MCF 10A (cell line): ENCODE measurements at regions of chr14 and their contacts with region 1.

Region 1: DNA sequence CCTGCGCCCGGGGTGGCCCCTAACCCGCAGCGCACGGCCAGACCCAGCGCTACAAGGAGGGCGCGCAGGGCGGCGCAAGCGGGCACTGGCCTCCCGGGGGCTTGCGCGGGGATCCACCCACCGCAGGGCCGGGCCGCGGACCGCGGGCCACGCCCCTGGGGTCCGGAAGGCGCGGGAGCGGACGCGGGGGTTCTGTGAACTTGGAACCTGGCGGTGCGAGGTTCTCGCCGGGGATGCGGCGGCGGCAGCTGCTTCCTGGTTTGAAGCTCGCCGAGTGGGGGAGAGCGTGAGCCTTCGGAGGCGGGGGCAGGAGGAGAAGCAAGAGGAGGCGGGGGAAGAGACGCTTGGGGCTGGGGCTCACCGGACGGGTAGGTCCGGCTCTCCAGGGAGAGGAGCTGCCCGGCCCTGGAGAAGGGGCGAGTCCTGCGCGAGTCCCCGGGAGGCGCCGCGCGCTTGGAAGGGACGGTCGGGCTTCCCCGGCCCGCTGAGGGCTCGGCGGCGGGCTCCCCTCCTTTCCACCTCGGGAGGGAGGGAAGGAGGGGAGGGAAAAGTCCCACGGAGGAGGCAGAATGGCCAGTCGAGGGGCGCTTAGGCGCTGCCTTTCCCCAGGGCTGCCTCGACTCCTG is at the start of gene PRKCH:
- DNase-seq: peak; percentile 78
- H3K4me3 Mint-ChIP-seq: peak within 1 kb of the TSS; percentile 94
- H3K27ac Mint-ChIP-seq: peak within 1 kb of the TSS; percentile 98
- H3K4me1 Mint-ChIP-seq: peaks cover 15% of the 10 kb centered on the region
- H3K27me3 Mint-ChIP-seq: no peaks in the 10 kb centered on the region
- CTCF ChIP-seq: no peak
- total RNA-seq, gene PRKCH: 10.4 and 12.4 TPM in 2 replicates

Region 2: DNA sequence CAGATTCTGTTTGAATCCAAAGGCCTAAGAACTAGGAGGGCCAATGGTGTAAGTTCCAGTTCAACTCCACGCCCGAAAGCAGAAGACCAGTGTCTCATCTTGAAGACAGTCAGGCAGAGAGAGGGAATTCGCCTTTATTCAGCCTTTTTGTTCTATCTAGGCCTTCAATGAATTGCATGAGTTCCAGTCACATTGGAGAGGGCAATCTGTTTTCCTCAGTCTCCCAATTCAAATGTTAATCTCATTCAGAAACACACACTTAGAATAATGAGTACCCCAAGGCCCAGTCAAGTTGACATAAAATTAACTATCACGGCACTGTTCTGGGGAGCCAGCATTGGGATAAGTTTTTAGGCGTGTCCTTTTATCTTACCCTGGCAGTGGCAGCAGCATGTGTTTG is 901.4 kb before region 1 on chr14:
- CTCF ChIA-PET with region 1: no interaction called
- POLR2A ChIA-PET with region 1: no interaction called
- intact Hi-C with region 1: no loop called
- DNase-seq: no peak
- H3K4me3 Mint-ChIP-seq: no peak overlapping the region
- H3K27ac Mint-ChIP-seq: no peak overlapping the region
- H3K4me1 Mint-ChIP-seq: no peaks in the 10 kb centered on the region
- H3K27me3 Mint-ChIP-seq: peaks cover 11% of the 10 kb centered on the region
- CTCF ChIP-seq: no peak

Region 3: DNA sequence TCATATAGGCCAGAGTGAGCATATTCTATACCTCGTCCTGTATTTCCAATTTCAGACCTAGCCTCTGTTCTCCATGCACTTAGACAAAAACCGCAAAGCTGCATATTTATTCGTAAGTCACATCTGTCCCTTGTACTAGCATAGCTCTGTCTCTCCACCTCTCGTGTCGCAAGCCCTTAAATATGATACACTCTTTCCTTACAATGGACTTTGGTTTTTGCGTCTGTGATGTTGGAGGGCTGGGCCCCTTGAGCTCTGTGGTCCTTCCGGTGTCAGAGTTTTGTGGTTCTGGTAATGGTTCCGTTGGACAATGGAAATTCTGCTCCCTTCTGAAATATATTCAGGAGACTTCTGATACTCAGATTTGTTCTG is 11.1 kb after region 1 on chr14:
- CTCF ChIA-PET with region 1: interaction called, 3 read pairs
- POLR2A ChIA-PET with region 1: interaction called, 11 read pairs
- intact Hi-C with region 1: no loop called
- DNase-seq: no peak
- H3K4me3 Mint-ChIP-seq: no peak overlapping the region
- H3K27ac Mint-ChIP-seq: no peak overlapping the region
- H3K4me1 Mint-ChIP-seq: no peaks in the 10 kb centered on the region
- H3K27me3 Mint-ChIP-seq: no peaks in the 10 kb centered on the region
- CTCF ChIP-seq: no peak

Region 4: GRCh38 chr14:61381547-61381946 is 60.0 kb after region 1 on chr14:
- CTCF ChIA-PET with region 1: interaction called, 4 read pairs
- POLR2A ChIA-PET with region 1: interaction called, 13 read pairs
- intact Hi-C with region 1: no loop called
- DNase-seq: peak; percentile 46
- H3K4me3 Mint-ChIP-seq: no peak overlapping the region
- H3K27ac Mint-ChIP-seq: no peak overlapping the region
- H3K4me1 Mint-ChIP-seq: peaks cover 6% of the 10 kb centered on the region
- H3K27me3 Mint-ChIP-seq: no peaks in the 10 kb centered on the region
- CTCF ChIP-seq: no peak

Region 5: GRCh38 chr14:61420326-61420725 is 98.8 kb after region 1 on chr14:
- CTCF ChIA-PET with region 1: interaction called, 4 read pairs
- POLR2A ChIA-PET with region 1: interaction called, 38 read pairs
- intact Hi-C with region 1: no loop called
- DNase-seq: peak; percentile 88
- H3K4me3 Mint-ChIP-seq: peak overlapping the region; percentile 45
- H3K27ac Mint-ChIP-seq: peak overlapping the region; percentile 71
- H3K4me1 Mint-ChIP-seq: peaks cover 32% of the 10 kb centered on the region
- H3K27me3 Mint-ChIP-seq: no peaks in the 10 kb centered on the region
- CTCF ChIP-seq: no peak

Region 6: DNA sequence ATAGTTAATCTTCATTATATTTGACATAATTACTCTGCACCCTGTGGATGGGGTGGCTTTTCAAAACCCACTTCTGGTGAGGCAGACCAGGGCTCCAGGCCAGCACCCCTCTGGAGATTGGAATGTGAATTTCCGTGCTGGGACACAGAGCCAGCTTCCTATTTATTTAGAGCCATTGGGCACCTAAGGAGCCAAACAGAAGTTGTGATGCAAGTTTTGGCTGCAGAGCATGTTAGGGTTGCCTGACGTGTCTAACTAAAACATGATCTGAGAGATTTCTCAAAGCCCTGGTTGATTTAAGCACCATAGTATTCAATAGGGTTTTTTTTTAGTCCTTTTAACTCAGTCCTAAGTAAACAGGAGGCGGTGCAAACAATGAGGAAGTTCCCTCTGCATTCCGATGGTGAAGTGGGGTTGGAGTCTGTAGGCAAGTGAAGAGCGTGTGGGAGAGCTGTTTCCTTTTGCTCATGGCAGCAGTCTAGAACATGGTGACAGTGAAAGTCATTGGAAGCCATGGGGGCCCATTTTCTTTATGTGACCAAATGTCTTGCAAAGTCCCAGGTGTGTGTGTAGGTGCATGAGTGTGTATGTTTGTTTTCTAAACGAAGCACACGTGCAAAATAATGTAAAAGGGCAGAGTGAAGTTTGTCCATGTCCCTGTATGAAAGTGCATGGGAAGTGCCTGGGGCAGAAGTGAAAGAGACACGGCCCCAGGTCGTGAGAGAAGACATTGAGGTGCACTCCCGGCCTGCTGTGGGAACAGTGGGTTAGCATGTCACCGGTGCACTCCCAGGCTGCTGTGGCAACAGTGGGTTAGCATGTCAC is 117.6 kb after region 1 on chr14:
- CTCF ChIA-PET with region 1: interaction called, 3 read pairs
- POLR2A ChIA-PET with region 1: interaction called, 11 read pairs
- intact Hi-C with region 1: no loop called
- DNase-seq: peak; percentile 92
- H3K4me3 Mint-ChIP-seq: peak overlapping the region; percentile 68
- H3K27ac Mint-ChIP-seq: peak overlapping the region; percentile 86
- H3K4me1 Mint-ChIP-seq: peaks cover 17% of the 10 kb centered on the region
- H3K27me3 Mint-ChIP-seq: no peaks in the 10 kb centered on the region
- CTCF ChIP-seq: no peak

Region 7: DNA sequence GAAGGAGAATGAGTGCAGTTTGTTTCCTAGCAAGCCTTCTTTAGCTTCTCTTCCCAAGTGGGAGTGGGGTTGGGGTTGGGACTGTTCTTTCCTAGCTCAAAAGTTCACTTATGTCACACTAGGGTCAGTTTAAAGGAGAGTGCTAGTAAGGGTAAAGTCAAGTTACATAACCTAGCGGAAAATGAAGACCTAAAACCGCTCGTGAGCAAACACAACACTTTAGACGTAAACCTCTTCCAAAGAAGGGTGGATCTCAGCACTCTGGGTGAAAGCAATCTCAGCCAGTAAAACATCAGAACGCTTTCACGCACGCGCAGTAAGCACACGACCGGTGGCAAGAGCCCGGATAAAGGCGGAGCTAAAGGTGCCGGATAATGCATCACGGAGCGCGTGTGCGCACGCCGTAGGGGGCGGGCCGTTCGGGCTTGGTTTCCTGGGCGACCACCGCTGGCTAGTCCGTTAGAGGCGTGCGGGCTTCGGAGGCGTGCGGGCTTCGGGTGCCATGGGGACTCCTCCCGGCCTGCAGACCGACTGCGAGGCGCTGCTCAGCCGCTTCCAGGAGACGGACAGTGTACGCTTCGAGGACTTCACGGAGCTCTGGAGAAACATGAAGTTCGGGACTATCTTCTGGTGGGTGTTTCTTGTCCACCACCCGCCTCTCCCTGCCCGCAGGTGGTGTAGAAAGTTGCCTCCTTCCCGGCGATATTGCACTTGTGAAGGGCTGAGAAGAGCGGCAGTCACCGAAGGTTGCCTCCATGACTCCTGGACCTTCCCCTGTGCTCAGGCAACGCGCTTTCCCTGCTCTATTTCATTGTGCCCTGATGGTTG is 440.7 kb after region 1 on chr14 and contains the start of gene SNAPC1:
- CTCF ChIA-PET with region 1: no interaction called
- POLR2A ChIA-PET with region 1: interaction called, 11 read pairs
- intact Hi-C with region 1: no loop called
- DNase-seq: peak; percentile 99
- H3K4me3 Mint-ChIP-seq: peak within 1 kb of the TSS; percentile 92
- H3K27ac Mint-ChIP-seq: peak within 1 kb of the TSS; percentile 91
- H3K4me1 Mint-ChIP-seq: peaks cover 21% of the 10 kb centered on the region
- H3K27me3 Mint-ChIP-seq: no peaks in the 10 kb centered on the region
- CTCF ChIP-seq: no peak
- total RNA-seq, gene SNAPC1: 18.4 and 21.0 TPM in 2 replicates